MCF 10A (cell line): ENCODE measurements at regions of chr1 and their contacts with region 1.

Region 1: GRCh38 chr1:94805912-94806311 is 14.2 kb upstream of the SLC44A3 start:
- DNase-seq: peak; percentile 68
- H3K4me3 Mint-ChIP-seq: no peak overlapping the region
- H3K27ac Mint-ChIP-seq: no peak overlapping the region
- H3K4me1 Mint-ChIP-seq: peaks cover 16% of the 10 kb centered on the region
- H3K27me3 Mint-ChIP-seq: no peaks in the 10 kb centered on the region
- CTCF ChIP-seq: peak; percentile 96

Region 2: GRCh38 chr1:94335950-94336349 is 470.0 kb before region 1 on chr1:
- CTCF ChIA-PET with region 1: interaction called, 7 read pairs
- POLR2A ChIA-PET with region 1: no interaction called
- intact Hi-C with region 1: loop called (anchors 2 kb)
- DNase-seq: peak; percentile 93
- H3K4me3 Mint-ChIP-seq: no peak overlapping the region
- H3K27ac Mint-ChIP-seq: no peak overlapping the region
- H3K4me1 Mint-ChIP-seq: no peaks in the 10 kb centered on the region
- H3K27me3 Mint-ChIP-seq: peaks cover 11% of the 10 kb centered on the region
- CTCF ChIP-seq: peak; percentile 92

Region 3: DNA sequence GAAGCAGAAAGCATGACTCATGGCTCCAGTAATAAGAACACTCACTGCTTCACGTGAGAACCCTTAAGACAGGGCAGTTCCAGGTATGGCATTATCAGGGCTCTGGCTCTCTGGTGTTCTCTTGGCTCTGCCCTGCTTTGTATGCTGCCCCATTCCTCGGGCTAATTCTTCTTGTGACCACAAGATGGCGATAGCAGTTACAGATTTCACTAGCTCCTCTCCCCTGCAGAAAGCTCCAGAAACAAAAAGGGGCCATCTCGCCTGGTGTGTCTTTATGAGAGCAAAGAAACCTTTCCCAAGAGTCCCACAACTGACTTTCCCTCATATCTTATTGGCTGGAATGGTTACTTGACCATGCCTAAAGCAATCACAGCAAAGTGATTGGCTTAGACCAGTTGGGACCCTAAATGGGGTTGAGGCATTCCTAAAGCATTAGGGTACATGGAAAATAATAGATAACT is 324.4 kb before region 1 on chr1:
- CTCF ChIA-PET with region 1: interaction called, 100 read pairs
- POLR2A ChIA-PET with region 1: interaction called, 3 read pairs
- intact Hi-C with region 1: loop called (anchors 1 kb)
- DNase-seq: peak; percentile 78
- H3K4me3 Mint-ChIP-seq: no peak overlapping the region
- H3K27ac Mint-ChIP-seq: no peak overlapping the region
- H3K4me1 Mint-ChIP-seq: no peaks in the 10 kb centered on the region
- H3K27me3 Mint-ChIP-seq: no peaks in the 10 kb centered on the region
- CTCF ChIP-seq: peak; percentile 71

Region 4: GRCh38 chr1:94514095-94514727 is 291.7 kb before region 1 on chr1:
- CTCF ChIA-PET with region 1: interaction called, 457 read pairs
- POLR2A ChIA-PET with region 1: interaction called, 3 read pairs
- intact Hi-C with region 1: loop called (anchors 1 kb)
- DNase-seq: peak; percentile 53
- H3K4me3 Mint-ChIP-seq: no peak overlapping the region
- H3K27ac Mint-ChIP-seq: no peak overlapping the region
- H3K4me1 Mint-ChIP-seq: no peaks in the 10 kb centered on the region
- H3K27me3 Mint-ChIP-seq: no peaks in the 10 kb centered on the region
- CTCF ChIP-seq: peak; percentile 63

Region 5: DNA sequence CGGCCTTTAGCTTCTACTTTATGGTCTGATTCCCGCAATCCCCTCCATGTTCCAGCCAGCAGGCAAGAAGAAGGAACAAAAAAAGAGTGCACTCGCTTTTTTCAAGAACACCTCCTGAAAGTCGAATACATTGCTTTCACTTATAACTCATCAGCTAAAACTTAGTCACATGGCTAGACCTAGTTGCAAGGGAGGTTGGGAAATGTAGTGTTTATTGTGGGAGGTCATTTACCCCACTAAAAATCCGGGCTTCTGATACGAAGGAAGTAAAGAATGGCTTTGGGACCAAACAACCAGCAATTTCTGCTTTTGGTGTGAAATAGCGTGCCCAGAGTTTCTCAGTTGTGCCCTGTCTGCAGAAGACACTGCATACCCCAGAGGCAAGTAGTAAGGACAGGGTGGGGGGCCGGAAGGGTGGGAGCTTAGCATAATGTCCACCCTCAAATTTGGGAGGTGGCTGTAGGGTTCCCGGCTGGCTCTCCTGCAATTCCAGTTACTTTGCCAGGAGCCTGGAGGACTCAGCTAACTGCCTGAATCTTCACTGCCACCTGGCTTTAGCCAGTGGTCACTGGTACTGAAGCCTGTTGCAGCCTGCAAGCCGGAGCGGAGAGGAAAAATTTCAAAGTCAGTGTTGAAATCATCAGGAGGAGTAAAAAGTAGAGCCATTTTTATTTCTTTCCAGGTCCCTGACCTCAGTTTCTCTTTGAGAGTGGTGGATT is 206.7 kb before region 1 on chr1:
- CTCF ChIA-PET with region 1: interaction called, 30 read pairs
- POLR2A ChIA-PET with region 1: interaction called, 3 read pairs
- intact Hi-C with region 1: loop called (anchors 2 kb)
- DNase-seq: peak; percentile 75
- H3K4me3 Mint-ChIP-seq: no peak overlapping the region
- H3K27ac Mint-ChIP-seq: no peak overlapping the region
- H3K4me1 Mint-ChIP-seq: peaks cover 43% of the 10 kb centered on the region
- H3K27me3 Mint-ChIP-seq: no peaks in the 10 kb centered on the region
- CTCF ChIP-seq: peak; percentile 43

Region 6: GRCh38 chr1:94734963-94735899 is 70.7 kb before region 1 on chr1:
- CTCF ChIA-PET with region 1: interaction called, 5 read pairs
- POLR2A ChIA-PET with region 1: interaction called, 3 read pairs
- intact Hi-C with region 1: loop called (anchors 5 kb)
- DNase-seq: peak; percentile 95
- H3K4me3 Mint-ChIP-seq: peak overlapping the region; percentile 18
- H3K27ac Mint-ChIP-seq: peak overlapping the region; percentile 93
- H3K4me1 Mint-ChIP-seq: peaks cover 60% of the 10 kb centered on the region
- H3K27me3 Mint-ChIP-seq: no peaks in the 10 kb centered on the region
- CTCF ChIP-seq: no peak

Region 7: DNA sequence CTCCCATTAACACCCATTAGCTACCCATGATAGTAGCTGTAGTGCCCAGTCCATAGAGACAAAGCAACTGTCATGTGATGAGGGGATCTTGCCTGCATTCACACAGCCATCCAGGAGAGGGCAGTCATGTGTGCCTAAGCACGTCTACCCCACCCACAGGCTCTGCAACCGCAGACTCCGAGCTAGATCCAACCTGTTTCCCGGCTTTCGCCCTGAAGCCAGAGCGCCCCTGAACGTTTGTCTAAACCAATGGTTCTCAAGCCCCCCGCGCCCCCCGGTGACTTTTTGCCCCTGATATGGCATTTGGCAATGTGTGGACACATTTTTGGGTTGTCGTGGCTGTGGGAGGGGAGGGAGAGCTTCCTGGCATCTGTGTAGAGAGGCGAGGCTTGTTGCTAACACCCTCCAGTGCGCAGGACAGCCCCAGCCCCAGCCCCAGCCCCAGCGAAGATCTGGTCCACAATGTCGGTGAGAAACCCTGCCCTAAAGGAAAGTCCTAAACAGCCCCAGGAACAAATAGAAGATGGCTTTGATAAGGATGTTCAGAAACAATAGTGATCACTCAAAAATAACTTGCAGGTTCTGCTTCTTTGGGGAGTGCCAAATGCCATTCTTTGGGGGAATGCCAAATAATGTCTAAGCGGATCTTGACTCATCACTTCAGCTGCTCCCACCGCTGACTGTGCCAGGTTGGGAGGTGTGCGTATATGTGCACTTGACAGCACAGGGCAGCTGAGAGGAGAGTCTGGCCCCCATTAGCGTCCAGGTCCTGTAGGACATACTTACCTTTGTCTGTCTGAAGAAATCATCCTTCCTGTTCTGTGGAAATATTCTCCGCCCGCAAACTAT is 48.8 kb after region 1 on chr1:
- CTCF ChIA-PET with region 1: interaction called, 23 read pairs
- POLR2A ChIA-PET with region 1: no interaction called
- intact Hi-C with region 1: no loop called
- DNase-seq: peak; percentile 97
- H3K4me3 Mint-ChIP-seq: no peak overlapping the region
- H3K27ac Mint-ChIP-seq: no peak overlapping the region
- H3K4me1 Mint-ChIP-seq: peaks cover 6% of the 10 kb centered on the region
- H3K27me3 Mint-ChIP-seq: no peaks in the 10 kb centered on the region
- CTCF ChIP-seq: peak; percentile 82

Region 8: DNA sequence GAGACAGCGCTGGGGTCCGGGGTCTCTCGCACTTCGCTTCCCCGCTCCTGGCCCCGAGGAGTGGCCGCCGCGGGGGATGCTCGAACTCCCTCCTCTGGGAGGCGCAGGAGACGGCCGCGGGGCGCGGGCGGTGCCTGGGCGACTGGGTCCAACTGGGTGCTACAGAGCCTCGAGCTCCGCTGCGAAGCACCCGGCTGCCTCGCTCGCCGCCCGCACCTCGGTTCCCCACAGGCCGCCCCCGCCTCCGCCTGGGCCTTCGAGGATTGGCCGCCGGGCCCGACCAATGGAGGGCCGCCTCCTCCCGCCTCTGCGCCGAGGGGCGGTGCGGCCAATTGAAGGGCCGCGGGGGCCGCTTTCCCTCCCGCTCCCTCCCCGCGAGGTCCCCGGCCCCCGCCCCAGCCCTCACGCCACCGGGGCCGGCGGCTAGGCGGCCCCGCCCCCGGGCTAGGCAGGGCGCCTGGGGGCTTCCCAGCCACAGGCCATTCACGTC is 121.0 kb after region 1 on chr1 and contains the start of gene CNN3:
- CTCF ChIA-PET with region 1: no interaction called
- POLR2A ChIA-PET with region 1: no interaction called
- intact Hi-C with region 1: no loop called
- DNase-seq: peak; percentile 85
- H3K4me3 Mint-ChIP-seq: peak within 1 kb of the TSS; percentile 97
- H3K27ac Mint-ChIP-seq: peak within 1 kb of the TSS; percentile 69
- H3K4me1 Mint-ChIP-seq: peaks cover 22% of the 10 kb centered on the region
- H3K27me3 Mint-ChIP-seq: no peaks in the 10 kb centered on the region
- CTCF ChIP-seq: no peak
- total RNA-seq, gene CNN3: 44.5 and 48.2 TPM in 2 replicates

Region 9: DNA sequence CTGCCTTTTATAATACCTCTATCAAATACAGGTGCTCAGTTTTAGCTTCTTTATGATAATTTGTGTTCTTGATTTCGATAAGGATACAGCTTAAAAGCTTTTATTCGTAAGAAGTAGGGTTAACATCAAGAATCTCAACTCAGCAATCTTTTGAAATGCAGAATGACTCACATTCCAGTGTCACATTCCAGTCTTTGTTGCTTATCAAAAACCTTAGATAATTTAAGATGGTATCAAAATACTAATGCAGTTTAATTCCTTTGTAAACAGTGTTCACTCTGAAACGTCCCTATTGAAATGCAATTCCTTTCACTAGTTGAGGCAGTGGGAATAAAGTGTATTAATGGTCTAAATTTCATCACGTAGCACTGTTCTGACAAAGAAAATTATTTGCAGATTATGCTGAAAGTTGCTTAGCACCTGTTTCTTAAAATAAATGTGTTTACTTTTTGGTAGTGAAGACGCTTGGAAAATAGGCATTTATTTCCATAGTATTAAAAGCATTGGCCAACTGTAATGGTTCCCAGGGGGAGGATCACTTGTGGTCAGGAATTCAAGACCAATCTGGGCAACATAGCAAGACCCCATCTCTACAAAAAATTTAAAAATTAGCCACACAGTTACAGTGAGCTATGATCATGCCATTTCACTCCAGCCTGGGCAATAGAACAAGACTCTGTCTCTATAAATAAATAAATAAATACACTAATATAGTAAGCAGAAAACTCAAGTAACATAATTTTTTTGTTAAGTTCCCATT is 131.1 kb after region 1 on chr1:
- CTCF ChIA-PET with region 1: no interaction called
- POLR2A ChIA-PET with region 1: no interaction called
- intact Hi-C with region 1: no loop called
- DNase-seq: no peak
- H3K4me3 Mint-ChIP-seq: no peak overlapping the region
- H3K27ac Mint-ChIP-seq: no peak overlapping the region
- H3K4me1 Mint-ChIP-seq: peaks cover 23% of the 10 kb centered on the region
- H3K27me3 Mint-ChIP-seq: no peaks in the 10 kb centered on the region
- CTCF ChIP-seq: no peak